ENCODE measurements at regions of chr10 and their contacts with region 1.

Region 1: GRCh38 chr10:117350909-117351308 is 24.3 kb downstream of the PDZD8 start:
- DNase-seq: no peak
- H3K4me3 ChIP-seq: no peak overlapping the region
- H3K27ac ChIP-seq: no peak overlapping the region
- H3K4me1 ChIP-seq: peaks cover 19 to 58% (median 29%) of the 10 kb centered on the region in 4 experiments
- H3K27me3 ChIP-seq: no peaks in the 10 kb centered on the region

Region 2: DNA sequence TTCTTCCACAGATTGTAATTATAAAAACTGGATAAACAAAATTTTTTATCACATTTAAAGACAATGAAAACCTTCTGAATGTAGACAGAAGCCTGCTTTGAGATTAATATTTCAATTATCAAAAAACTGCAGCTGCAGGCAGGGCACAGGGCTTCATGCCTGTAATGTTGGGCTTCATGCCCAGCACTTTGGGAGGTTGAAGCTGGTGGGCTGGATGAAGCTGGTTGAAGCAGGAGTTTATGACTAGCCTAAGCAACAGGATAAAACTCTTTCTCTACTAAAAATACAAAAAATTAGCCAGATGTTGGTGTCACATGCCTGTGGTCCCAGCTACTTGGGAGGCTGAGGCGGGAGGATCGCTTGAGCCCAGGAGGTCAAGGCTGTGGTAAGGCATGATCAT is 16.8 kb before region 1 on chr10:
- CTCF ChIA-PET with region 1: interaction called, 14 read pairs
- POLR2A ChIA-PET with region 1: no interaction called
- DNase-seq: peak in 2 of 3 donors; percentile 19 to 47
- H3K4me3 ChIP-seq: no peak overlapping the region
- H3K27ac ChIP-seq: no peak overlapping the region
- H3K4me1 ChIP-seq: no peaks in the 10 kb centered on the region
- H3K27me3 ChIP-seq: no peaks in the 10 kb centered on the region

Region 3: GRCh38 chr10:117360994-117361667 is 10.2 kb after region 1 on chr10:
- CTCF ChIA-PET with region 1: interaction called, 10 read pairs
- POLR2A ChIA-PET with region 1: no interaction called
- DNase-seq: no peak
- H3K4me3 ChIP-seq: no peak overlapping the region
- H3K27ac ChIP-seq: peak overlapping the region in 1 of 2 experiments; percentile 20
- H3K4me1 ChIP-seq: peaks cover 18 to 66% (median 24%) of the 10 kb centered on the region in 4 experiments
- H3K27me3 ChIP-seq: no peaks in the 10 kb centered on the region

Region 4: DNA sequence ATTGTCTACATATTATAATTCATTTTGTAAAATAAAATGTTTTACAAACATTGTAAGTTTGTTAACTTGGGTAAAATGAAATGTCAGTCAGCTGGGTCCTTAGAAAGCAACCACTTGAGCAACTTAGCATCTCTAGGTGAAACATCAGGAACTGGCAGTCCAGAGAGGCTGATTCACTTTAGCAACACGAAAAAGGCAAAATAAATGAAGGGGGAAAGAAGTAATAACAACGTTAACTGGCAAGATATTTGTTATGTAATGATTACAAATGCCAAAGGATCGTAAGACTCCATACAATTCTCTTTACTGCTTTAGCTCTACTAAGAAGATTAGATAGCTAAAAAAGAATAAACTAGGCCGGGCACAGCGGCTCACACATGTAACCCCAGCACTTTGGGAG is 19.3 kb after region 1 on chr10:
- CTCF ChIA-PET with region 1: interaction called, 15 read pairs
- POLR2A ChIA-PET with region 1: no interaction called
- DNase-seq: no peak
- H3K4me3 ChIP-seq: peak overlapping the region in 4 of 7 experiments; percentile 85 to 97 (median 92)
- H3K27ac ChIP-seq: peak overlapping the region in 1 of 2 experiments; percentile 49
- H3K4me1 ChIP-seq: peaks cover 24 to 71% (median 35%) of the 10 kb centered on the region in 4 experiments
- H3K27me3 ChIP-seq: no peaks in the 10 kb centered on the region

Measured in common myeloid progenitor, CD34-positive (primary cell).